ENCODE measurements at regions of chr11 and their contacts with region 1.

Region 1: DNA sequence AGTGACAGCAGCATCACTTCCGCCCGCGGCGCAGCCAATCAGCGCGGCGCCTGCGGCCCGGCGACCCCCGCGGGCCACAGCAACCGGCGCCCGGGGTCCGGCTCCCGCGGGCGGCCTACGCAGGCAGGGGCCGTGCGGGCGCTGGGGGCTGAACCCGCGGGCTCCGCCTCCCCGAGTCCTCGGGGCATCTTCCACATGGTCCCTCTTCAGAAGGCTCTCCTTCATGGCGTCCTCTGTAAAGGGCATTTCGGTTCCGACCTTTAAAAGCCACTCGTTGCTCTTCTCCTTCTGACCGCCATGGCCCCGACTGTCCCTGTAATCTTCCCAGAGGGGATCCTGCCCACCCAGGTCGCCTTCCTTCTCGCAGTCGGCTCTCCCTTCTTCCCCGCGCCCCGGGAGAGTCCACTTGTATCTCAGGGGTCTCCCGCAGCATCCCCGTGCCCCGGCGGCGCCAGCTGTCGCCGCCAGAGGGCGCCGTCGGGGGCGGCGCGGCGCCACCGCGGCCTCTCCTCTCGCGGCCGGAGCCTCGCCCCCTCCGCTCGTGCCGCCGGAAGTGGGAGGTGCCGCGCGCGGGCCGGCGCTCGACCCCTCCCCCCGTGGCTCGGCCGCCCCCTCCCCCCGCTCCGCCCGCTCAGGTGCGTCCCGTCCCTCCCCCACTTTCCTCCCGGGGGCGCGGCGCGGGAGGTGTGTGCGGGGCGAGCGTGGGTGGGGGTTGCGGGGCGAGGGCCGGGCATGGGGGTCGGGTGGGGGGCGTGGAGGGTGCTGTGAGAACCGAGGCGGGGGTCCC is at the start of gene RNF214:
- DNase-seq: peak; percentile 87 to 92
- H3K4me3 ChIP-seq: peak within 1 kb of the TSS; percentile 63
- H3K4me3 Mint-ChIP-seq: peak within 1 kb of the TSS; percentile 97
- H3K27ac Mint-ChIP-seq: peak within 1 kb of the TSS; percentile 95
- H3K4me1 ChIP-seq: peaks cover 20% of the 10 kb centered on the region
- H3K4me1 Mint-ChIP-seq: peaks cover 16% of the 10 kb centered on the region
- H3K27me3 ChIP-seq: no peaks in the 10 kb centered on the region
- H3K27me3 Mint-ChIP-seq: no peaks in the 10 kb centered on the region
- CTCF ChIP-seq: peak; percentile 73 to 99
- total RNA-seq, gene RNF214: 51.2 and 55.8 TPM in 2 replicates

Region 2: GRCh38 chr11:116567721-116568242 is 664.5 kb before region 1 on chr11:
- CTCF ChIA-PET with region 1: no interaction called
- POLR2A ChIA-PET with region 1: no interaction called
- intact Hi-C with region 1: no loop called
- DNase-seq: no peak
- H3K4me3 ChIP-seq: no peak overlapping the region
- H3K4me3 Mint-ChIP-seq: no peak overlapping the region
- H3K27ac Mint-ChIP-seq: no peak overlapping the region
- H3K4me1 ChIP-seq: peaks cover 13% of the 10 kb centered on the region
- H3K4me1 Mint-ChIP-seq: peaks cover 10% of the 10 kb centered on the region
- H3K27me3 ChIP-seq: no peaks in the 10 kb centered on the region
- H3K27me3 Mint-ChIP-seq: no peaks in the 10 kb centered on the region
- CTCF ChIP-seq: no peak

Region 3: DNA sequence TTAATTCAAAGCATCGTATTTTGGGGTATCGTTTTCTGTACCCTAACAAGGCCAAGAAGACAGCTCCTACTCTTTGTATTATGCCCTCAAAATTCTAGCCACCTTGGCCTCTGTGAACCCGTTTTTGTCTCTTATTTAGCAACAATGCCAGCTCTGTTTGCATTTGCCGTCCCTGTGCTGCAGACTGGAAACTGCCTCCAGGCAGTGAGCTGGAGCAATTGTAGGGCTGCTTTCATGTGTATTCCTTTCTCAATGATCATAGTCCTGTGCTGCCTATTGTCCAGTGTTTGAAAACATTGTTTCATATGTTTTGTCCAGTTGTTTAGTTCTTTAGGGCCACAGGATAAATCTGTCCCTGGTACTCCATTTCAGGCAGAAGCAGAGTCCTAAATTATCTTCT is 38.9 kb after region 1 on chr11:
- CTCF ChIA-PET with region 1: no interaction called
- POLR2A ChIA-PET with region 1: no interaction called
- intact Hi-C with region 1: loop called (anchors 2 kb)
- DNase-seq: peak in 1 of 2 experiments; percentile 44
- H3K4me3 ChIP-seq: no peak overlapping the region
- H3K4me3 Mint-ChIP-seq: peak overlapping the region; percentile 43
- H3K27ac Mint-ChIP-seq: peak overlapping the region; percentile 89
- H3K4me1 ChIP-seq: peaks cover 38% of the 10 kb centered on the region
- H3K4me1 Mint-ChIP-seq: peaks cover 31% of the 10 kb centered on the region
- H3K27me3 ChIP-seq: no peaks in the 10 kb centered on the region
- H3K27me3 Mint-ChIP-seq: no peaks in the 10 kb centered on the region
- CTCF ChIP-seq: no peak

Region 4: GRCh38 chr11:117492578-117493251 is 260.4 kb after region 1 on chr11:
- CTCF ChIA-PET with region 1: no interaction called
- POLR2A ChIA-PET with region 1: no interaction called
- intact Hi-C with region 1: no loop called
- DNase-seq: no peak
- H3K4me3 ChIP-seq: no peak overlapping the region
- H3K4me3 Mint-ChIP-seq: no peak overlapping the region
- H3K27ac Mint-ChIP-seq: no peak overlapping the region
- H3K4me1 ChIP-seq: no peaks in the 10 kb centered on the region
- H3K4me1 Mint-ChIP-seq: no peaks in the 10 kb centered on the region
- H3K27me3 ChIP-seq: peaks cover 2% of the 10 kb centered on the region; the same call in 1 of the 2 replicates
- H3K27me3 Mint-ChIP-seq: peaks cover 15% of the 10 kb centered on the region
- CTCF ChIP-seq: no peak

Region 5: GRCh38 chr11:117511931-117512539 is 279.8 kb after region 1 on chr11:
- CTCF ChIA-PET with region 1: no interaction called
- POLR2A ChIA-PET with region 1: no interaction called
- intact Hi-C with region 1: no loop called
- DNase-seq: peak; percentile 19 to 69
- H3K4me3 ChIP-seq: no peak overlapping the region
- H3K4me3 Mint-ChIP-seq: no peak overlapping the region
- H3K27ac Mint-ChIP-seq: no peak overlapping the region
- H3K4me1 ChIP-seq: peaks cover 23% of the 10 kb centered on the region
- H3K4me1 Mint-ChIP-seq: peaks cover 15% of the 10 kb centered on the region
- H3K27me3 ChIP-seq: no peaks in the 10 kb centered on the region
- H3K27me3 Mint-ChIP-seq: no peaks in the 10 kb centered on the region
- CTCF ChIP-seq: no peak